Panc1 (cell line): ENCODE measurements at regions of chr14 and their contacts with region 1.

Region 1: GRCh38 chr14:52791203-52792096 is at the start of gene GNPNAT1:
- DNase-seq: peak; percentile 54
- ATAC-seq: peak; percentile 98
- H3K4me3 ChIP-seq: peak within 1 kb of the TSS; percentile 70 to 83
- H3K27ac ChIP-seq: peak within 1 kb of the TSS; percentile 91
- H3K4me1 ChIP-seq: peaks cover 5% of the 10 kb centered on the region
- H3K27me3 ChIP-seq: no peaks in the 10 kb centered on the region
- CTCF ChIP-seq: no peak
- total RNA-seq, gene GNPNAT1: 22.2 TPM

Region 2: DNA sequence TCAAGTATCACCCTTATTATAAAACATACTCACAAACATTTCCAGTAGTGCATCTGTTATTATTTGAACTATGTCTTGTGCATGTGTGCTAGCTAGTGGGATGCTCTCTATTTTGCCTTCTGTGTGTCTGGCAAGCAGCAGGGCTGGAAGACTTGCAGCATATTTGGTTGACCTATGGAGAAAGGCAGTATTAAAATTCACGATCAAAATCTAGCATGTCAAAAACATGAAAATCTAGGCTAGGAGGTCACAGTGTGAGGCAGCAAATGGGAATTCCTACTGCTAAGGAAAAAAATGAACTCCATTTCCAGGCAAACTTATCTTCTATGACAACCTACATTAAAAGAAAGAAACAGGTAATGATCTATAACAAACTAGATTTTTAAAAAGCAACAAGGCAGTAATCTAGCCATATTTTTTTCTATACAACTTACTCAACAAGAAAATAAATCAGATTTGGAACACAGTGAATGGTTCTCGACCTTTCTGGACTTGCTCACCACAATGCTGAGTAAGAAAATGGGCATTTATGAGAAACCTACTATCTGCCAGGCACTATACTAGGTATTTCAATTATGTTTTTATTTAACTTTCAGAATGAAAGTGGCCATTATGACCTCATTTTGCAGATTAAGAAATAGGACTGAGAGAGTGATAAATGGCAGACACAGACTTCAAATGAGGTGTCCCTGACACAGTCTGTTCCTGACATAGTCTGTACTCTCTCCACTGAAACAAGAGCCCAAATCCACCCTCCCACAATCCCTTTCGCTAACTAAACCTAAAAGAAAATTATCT is 336.0 kb before region 1 on chr14:
- CTCF ChIA-PET with region 1: interaction called, 14 read pairs
- POLR2A ChIA-PET with region 1: no interaction called
- in situ Hi-C with region 1: no loop called
- intact Hi-C with region 1: no loop called
- DNase-seq: no peak
- ATAC-seq: no peak
- H3K4me3 ChIP-seq: no peak overlapping the region
- H3K27ac ChIP-seq: no peak overlapping the region
- H3K4me1 ChIP-seq: no peaks in the 10 kb centered on the region
- H3K27me3 ChIP-seq: no peaks in the 10 kb centered on the region
- CTCF ChIP-seq: no peak

Region 3: GRCh38 chr14:52602131-52602530 is 189.3 kb before region 1 on chr14:
- CTCF ChIA-PET with region 1: no interaction called
- POLR2A ChIA-PET with region 1: interaction called, 10 read pairs
- in situ Hi-C with region 1: no loop called
- intact Hi-C with region 1: no loop called
- DNase-seq: no peak
- ATAC-seq: no peak
- H3K4me3 ChIP-seq: no peak overlapping the region
- H3K27ac ChIP-seq: no peak overlapping the region
- H3K4me1 ChIP-seq: no peaks in the 10 kb centered on the region
- H3K27me3 ChIP-seq: no peaks in the 10 kb centered on the region
- CTCF ChIP-seq: no peak